ENCODE measurements at regions of chr7 and their contacts with region 1.

Region 1: DNA sequence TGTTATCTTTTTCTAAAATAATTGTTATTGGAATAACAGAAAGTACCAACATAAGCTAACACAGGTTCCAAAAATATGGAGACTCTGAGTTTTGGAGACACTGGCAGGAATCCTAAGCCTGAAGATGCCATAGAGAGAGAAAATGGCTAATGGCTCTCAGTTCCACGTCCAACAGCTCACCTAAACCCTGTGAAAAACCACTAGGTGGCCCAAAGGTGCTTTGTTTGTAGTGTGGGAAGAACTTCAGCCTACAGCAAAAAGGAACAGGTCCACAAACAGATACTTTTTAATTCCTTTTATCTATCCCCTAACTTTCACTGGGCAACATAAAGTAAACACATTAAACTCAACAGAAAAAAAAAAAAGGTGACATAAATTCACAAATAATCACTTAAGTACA is 272.3 kb downstream of the SEMA3D start:
- DNase-seq: peak in 2 of 4 experiments; percentile 17 to 60
- ATAC-seq: peak; percentile 84
- H3K4me3 ChIP-seq: no peak overlapping the region
- H3K27ac ChIP-seq: no peak overlapping the region
- H3K4me1 ChIP-seq: peaks cover 0 to 25% of the 10 kb centered on the region in 2 experiments; a peak in 3 of 5 replicates
- H3K27me3 ChIP-seq: no peaks in the 10 kb centered on the region
- CTCF ChIP-seq: peak; percentile 21 to 51 (median 24); a peak in 3 of 6 replicates
- EP300 ChIP-seq: no peak
- POLR2A ChIP-seq: no peak
- RAD21 ChIP-seq: peak in 1 of 2 experiments; percentile 66; a peak in 3 of 4 replicates

Region 2: DNA sequence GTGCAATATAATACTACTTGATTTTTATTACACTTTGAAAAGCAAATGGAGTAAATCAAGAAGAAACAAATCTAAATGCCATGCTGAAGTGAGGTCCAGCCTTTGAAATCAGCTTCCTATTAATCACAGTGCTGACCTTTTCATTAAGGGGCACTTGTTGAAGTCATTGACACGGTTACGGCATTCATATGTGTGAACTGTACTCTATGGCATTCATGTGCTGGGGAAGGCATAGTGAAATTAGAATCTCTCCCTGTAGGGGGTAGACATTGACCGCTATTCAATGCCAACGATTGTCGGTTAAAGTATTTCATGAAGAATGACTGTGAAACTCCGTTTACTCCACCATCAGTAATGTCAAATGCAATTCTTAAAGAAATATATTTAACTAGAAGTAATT is 423.9 kb before region 1 on chr7:
- CTCF ChIA-PET with region 1: no interaction called
- POLR2A ChIA-PET with region 1: no interaction called
- in situ Hi-C with region 1: no loop called
- intact Hi-C with region 1: loop called (anchors 10 kb)
- DNase-seq: peak in 3 of 4 experiments; percentile 12 to 20 (median 14)
- ATAC-seq: peak; percentile 71; the same call in 2 of the 3 replicates
- H3K4me3 ChIP-seq: no peak overlapping the region
- H3K27ac ChIP-seq: no peak overlapping the region
- H3K4me1 ChIP-seq: no peaks in the 10 kb centered on the region
- H3K27me3 ChIP-seq: no peaks in the 10 kb centered on the region
- CTCF ChIP-seq: peak in 2 of 3 experiments; percentile 10 to 45; a peak in 4 of 6 replicates
- EP300 ChIP-seq: no peak
- POLR2A ChIP-seq: no peak
- RAD21 ChIP-seq: peak; percentile 74 to 78

Region 3: GRCh38 chr7:84529480-84530205 is 385.0 kb before region 1 on chr7:
- CTCF ChIA-PET with region 1: no interaction called
- POLR2A ChIA-PET with region 1: no interaction called
- in situ Hi-C with region 1: no loop called
- intact Hi-C with region 1: no loop called
- DNase-seq: no peak
- ATAC-seq: no peak
- H3K4me3 ChIP-seq: no peak overlapping the region
- H3K27ac ChIP-seq: no peak overlapping the region
- H3K4me1 ChIP-seq: no peaks in the 10 kb centered on the region
- H3K27me3 ChIP-seq: no peaks in the 10 kb centered on the region
- CTCF ChIP-seq: no peak
- EP300 ChIP-seq: no peak
- POLR2A ChIP-seq: no peak
- RAD21 ChIP-seq: no peak

Region 4: GRCh38 chr7:84848219-84848973 is 66.2 kb before region 1 on chr7:
- CTCF ChIA-PET with region 1: no interaction called
- POLR2A ChIA-PET with region 1: no interaction called
- in situ Hi-C with region 1: no loop called
- intact Hi-C with region 1: loop called (anchors 5 kb)
- DNase-seq: no peak
- ATAC-seq: no peak
- H3K4me3 ChIP-seq: no peak overlapping the region
- H3K27ac ChIP-seq: peak overlapping the region; percentile 7; the same call in 2 of the 3 replicates
- H3K4me1 ChIP-seq: peaks cover 0 to 6% of the 10 kb centered on the region in 2 experiments; a peak in 1 of 5 replicates
- H3K27me3 ChIP-seq: no peaks in the 10 kb centered on the region
- CTCF ChIP-seq: no peak
- EP300 ChIP-seq: no peak
- POLR2A ChIP-seq: no peak
- RAD21 ChIP-seq: no peak

Region 5: DNA sequence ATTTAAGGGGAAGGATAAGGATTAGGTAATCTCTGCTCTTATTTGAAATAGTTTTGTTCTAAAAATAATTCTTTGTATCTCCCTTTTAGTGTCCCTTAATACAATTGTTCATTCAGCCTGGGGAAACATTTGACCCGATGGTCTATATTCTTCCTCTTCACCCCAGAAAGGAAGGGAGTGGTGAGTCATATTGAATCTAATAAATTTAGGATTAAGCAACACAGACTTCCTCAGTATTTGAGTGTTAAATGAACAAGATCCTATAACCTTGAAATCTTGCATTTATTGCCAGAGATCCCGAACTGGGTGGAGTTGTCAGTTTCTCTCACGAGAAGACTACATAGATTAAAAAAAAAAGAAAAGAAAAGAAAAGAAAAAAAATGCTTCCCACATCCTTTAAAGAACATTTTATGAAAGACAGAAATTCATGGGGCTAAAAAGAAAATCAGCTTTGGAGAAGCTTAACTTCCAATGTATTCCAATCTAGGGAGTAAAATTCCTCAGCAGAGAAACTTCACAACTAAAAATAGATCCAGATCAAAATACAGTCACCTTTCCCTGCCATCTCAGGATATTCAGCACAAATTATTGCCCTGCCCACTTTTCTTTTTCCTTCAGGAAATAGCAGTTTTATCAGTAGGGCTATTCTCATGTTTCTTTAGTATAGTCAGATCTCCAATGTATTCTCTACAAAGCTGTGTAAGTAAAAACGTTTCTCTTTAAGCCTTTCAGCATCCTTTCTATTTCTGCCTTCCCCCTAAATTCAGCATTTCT is 190.0 kb after region 1 on chr7:
- CTCF ChIA-PET with region 1: no interaction called
- POLR2A ChIA-PET with region 1: no interaction called
- in situ Hi-C with region 1: no loop called
- intact Hi-C with region 1: no loop called
- DNase-seq: no peak
- ATAC-seq: no peak
- H3K4me3 ChIP-seq: no peak overlapping the region
- H3K27ac ChIP-seq: no peak overlapping the region
- H3K4me1 ChIP-seq: no peaks in the 10 kb centered on the region
- H3K27me3 ChIP-seq: no peaks in the 10 kb centered on the region
- CTCF ChIP-seq: no peak
- EP300 ChIP-seq: no peak
- POLR2A ChIP-seq: no peak
- RAD21 ChIP-seq: no peak